ENCODE measurements at regions of chr3 and their contacts with region 1.

Region 1: DNA sequence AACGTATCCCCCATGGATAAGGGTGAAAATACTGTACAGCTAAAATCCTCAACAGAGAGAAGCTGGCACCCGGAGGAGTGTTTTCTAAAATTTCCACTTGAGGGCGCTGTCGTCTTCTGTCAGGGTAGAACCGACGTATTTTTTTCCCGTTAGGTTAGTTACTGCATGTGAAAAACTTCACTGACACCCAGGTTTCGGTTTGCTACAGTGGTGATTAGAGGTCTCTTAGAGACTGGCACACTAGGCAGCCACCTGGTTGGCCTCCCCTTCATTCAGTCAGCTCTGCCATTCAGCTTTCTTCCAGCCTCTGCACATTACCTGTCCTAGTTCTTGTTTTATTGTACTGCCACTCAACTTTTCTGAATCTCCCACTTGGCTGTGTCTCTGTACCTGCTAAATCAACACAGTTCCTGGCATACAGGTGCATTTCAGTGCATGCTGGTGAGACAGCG is 18.4 kb downstream of the CCK start:
- DNase-seq: peak in 1 of 2 donors; percentile 47
- H3K4me3 ChIP-seq: no peak overlapping the region
- H3K27ac ChIP-seq: no peak overlapping the region
- H3K4me1 ChIP-seq: no peaks in the 10 kb centered on the region
- H3K27me3 ChIP-seq: peaks cover 0 to 11% of the 10 kb centered on the region in 2 donors
- CTCF ChIP-seq: peak; percentile 56 to 63

Region 2: GRCh38 chr3:42314411-42314810 is 66.8 kb after region 1 on chr3:
- intact Hi-C with region 1: no loop called
- DNase-seq: no peak
- H3K4me3 ChIP-seq: no peak overlapping the region
- H3K27ac ChIP-seq: no peak overlapping the region
- H3K4me1 ChIP-seq: no peaks in the 10 kb centered on the region
- H3K27me3 ChIP-seq: no peaks in the 10 kb centered on the region
- CTCF ChIP-seq: no peak

Region 3: DNA sequence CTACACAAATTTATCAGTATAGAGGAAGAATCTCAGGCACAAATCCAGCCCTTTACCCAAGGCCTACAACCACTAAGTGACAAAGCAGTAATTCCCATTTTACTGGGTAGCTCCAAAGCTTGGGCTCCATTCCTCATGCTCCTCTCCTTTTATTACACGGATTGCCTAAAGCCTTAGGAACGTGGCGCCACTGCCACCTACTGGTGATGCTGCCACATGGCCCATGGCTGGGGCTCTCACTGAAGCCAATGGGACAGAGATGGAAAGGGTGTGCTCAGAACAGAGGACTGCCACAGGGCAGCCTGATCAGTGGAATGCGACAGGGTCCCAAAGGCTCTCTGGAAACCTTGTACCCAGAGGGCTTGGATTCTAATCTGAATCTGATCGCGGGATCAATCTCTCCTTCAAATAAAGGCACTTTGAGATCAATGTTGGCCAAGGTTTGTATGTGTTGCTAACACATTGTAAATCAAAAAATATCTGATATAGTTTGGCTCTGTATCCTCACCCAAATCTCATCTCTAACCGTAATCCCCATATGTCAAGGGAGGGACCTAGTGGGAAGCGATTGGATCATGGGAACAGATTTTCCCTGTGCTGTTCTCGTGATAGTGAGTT is 196.3 kb after region 1 on chr3:
- intact Hi-C with region 1: loop called (anchors 5 kb)
- DNase-seq: peak; percentile 79 to 84
- H3K4me3 ChIP-seq: no peak overlapping the region
- H3K27ac ChIP-seq: no peak overlapping the region
- H3K4me1 ChIP-seq: no peaks in the 10 kb centered on the region
- H3K27me3 ChIP-seq: peaks cover 0 to 15% of the 10 kb centered on the region in 2 donors
- CTCF ChIP-seq: peak; percentile 96 to 99

Measured in tibial artery (tissue), 4 donors.